Activated CD4-positive, alpha-beta T cell treated with anti-CD3 and anti-CD28 coated beads for 36 hours (primary cell): ENCODE measurements at regions of chr1 and their contacts with region 1.

Region 1: DNA sequence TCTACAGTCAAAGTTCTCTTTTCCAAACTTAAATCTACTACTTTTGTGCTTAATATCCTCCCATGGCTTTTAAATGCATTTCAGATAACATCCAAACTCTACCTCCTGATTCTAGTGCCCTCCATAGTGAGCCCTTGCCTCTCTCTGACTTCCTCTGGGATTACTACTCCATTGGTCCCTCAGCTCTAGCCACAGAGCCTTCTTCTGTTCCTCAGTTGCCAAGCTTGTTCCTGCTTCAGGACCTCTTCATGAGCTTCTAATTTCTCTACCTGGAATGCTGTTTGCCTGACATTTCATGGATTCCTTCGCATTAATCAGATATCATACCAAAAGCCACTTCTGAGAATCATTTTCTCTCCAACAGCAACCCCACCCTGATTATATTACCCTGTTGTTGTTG is 208.1 kb downstream of the NTNG1 start:
- DNase-seq: no peak
- ATAC-seq: no peak
- H3K4me3 Mint-ChIP-seq: no peak overlapping the region
- H3K27ac Mint-ChIP-seq: no peak overlapping the region
- H3K4me1 Mint-ChIP-seq: no peaks in the 10 kb centered on the region
- H3K27me3 Mint-ChIP-seq: no peaks in the 10 kb centered on the region

Region 2: GRCh38 chr1:107359472-107360241 is 10.8 kb after region 1 on chr1:
- CTCF ChIA-PET with region 1: no interaction called
- POLR2A ChIA-PET with region 1: no interaction called
- intact Hi-C with region 1: loop called in 1 of 2 experiments (anchors 1 kb)
- DNase-seq: no peak
- ATAC-seq: no peak
- H3K4me3 Mint-ChIP-seq: no peak overlapping the region
- H3K27ac Mint-ChIP-seq: no peak overlapping the region
- H3K4me1 Mint-ChIP-seq: no peaks in the 10 kb centered on the region
- H3K27me3 Mint-ChIP-seq: no peaks in the 10 kb centered on the region